Aorta (tissue), 5 donors: ENCODE measurements at regions of chr18 and their contacts with region 1.

Region 1: GRCh38 chr18:7038330-7038851 is 79.2 kb downstream of the LAMA1 start:
- DNase-seq: peak; percentile 79 to 94
- ATAC-seq: peak; percentile 87
- H3K4me3 ChIP-seq: no peak overlapping the region
- H3K27ac ChIP-seq: no peak overlapping the region
- H3K4me1 ChIP-seq: no peaks in the 10 kb centered on the region
- H3K27me3 ChIP-seq: no peaks in the 10 kb centered on the region

Region 2: DNA sequence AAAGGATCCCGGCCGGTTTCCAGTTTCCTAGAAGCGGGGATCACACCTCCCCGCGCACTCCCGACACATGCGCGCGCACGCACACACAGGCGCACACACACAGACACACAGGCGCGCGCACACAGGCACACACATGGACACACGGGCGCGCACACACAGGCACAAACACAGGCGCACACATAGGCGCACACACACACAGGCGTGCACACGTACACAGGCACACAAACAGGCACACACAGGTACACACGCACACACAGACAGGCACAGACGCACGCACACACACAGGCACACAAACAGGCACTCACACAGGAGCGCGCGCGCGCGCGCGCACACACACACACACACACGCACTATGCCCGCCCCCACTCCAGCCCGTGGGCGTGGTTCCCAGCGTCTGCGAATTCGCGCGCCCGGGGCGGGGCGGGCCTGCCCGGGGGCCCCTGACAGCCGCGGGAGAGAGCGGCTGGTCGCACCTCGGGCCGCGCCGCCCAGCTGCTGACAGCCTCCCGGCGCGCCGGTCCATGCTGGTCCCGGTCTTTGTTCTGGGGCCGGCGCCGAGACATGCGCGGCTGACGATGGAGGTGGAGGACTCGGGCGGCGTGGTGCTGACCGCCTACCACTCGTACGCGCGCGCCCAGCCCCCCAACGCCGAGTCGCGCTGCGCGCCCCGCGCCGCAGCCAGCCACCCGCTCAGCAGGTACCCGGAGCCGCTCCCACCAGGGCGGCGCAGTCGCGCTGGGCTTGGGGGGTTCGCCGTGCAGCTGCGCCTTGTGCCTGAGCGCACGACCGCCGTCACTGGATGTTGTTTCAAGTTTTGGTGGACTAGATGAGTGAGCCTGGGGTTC is 308.9 kb before region 1 on chr18 and contains the start of gene ARHGAP28:
- intact Hi-C with region 1: no loop called
- DNase-seq: peak; percentile 73 to 86
- ATAC-seq: peak; percentile 87
- H3K4me3 ChIP-seq: peak within 1 kb of the TSS; percentile 12 to 44
- H3K27ac ChIP-seq: no peak within 1 kb of the TSS
- H3K4me1 ChIP-seq: no peaks in the 10 kb centered on the region
- H3K27me3 ChIP-seq: no peaks in the 10 kb centered on the region
- total RNA-seq, gene ARHGAP28: 3.5 to 8.6 TPM

Region 3: GRCh38 chr18:7094432-7094831 is 56.0 kb after region 1 on chr18:
- intact Hi-C with region 1: no loop called
- DNase-seq: no peak
- ATAC-seq: no peak
- H3K4me3 ChIP-seq: no peak overlapping the region
- H3K27ac ChIP-seq: no peak overlapping the region
- H3K4me1 ChIP-seq: no peaks in the 10 kb centered on the region
- H3K27me3 ChIP-seq: no peaks in the 10 kb centered on the region

Region 4: GRCh38 chr18:7117390-7118355 is 79.3 kb after region 1 on chr18 and contains the start of gene LAMA1:
- intact Hi-C with region 1: loop called in 1 of 2 experiments (anchors 5 kb)
- DNase-seq: peak in 1 of 2 donors; percentile 78
- ATAC-seq: peak; percentile 19
- H3K4me3 ChIP-seq: peak within 1 kb of the TSS; percentile 30
- H3K27ac ChIP-seq: no peak within 1 kb of the TSS
- H3K4me1 ChIP-seq: no peaks in the 10 kb centered on the region
- H3K27me3 ChIP-seq: no peaks in the 10 kb centered on the region
- total RNA-seq, gene LAMA1: 0.78 to 3.1 TPM

Region 5: GRCh38 chr18:7177116-7177744 is 138.8 kb after region 1 on chr18:
- intact Hi-C with region 1: loop called (anchors 1 to 5 kb)
- DNase-seq: no peak
- ATAC-seq: peak; percentile 78
- H3K4me3 ChIP-seq: no peak overlapping the region
- H3K27ac ChIP-seq: no peak overlapping the region
- H3K4me1 ChIP-seq: no peaks in the 10 kb centered on the region
- H3K27me3 ChIP-seq: no peaks in the 10 kb centered on the region